GM12878 (cell line): ENCODE measurements at regions of chr10 and their contacts with region 1.

Region 1: DNA sequence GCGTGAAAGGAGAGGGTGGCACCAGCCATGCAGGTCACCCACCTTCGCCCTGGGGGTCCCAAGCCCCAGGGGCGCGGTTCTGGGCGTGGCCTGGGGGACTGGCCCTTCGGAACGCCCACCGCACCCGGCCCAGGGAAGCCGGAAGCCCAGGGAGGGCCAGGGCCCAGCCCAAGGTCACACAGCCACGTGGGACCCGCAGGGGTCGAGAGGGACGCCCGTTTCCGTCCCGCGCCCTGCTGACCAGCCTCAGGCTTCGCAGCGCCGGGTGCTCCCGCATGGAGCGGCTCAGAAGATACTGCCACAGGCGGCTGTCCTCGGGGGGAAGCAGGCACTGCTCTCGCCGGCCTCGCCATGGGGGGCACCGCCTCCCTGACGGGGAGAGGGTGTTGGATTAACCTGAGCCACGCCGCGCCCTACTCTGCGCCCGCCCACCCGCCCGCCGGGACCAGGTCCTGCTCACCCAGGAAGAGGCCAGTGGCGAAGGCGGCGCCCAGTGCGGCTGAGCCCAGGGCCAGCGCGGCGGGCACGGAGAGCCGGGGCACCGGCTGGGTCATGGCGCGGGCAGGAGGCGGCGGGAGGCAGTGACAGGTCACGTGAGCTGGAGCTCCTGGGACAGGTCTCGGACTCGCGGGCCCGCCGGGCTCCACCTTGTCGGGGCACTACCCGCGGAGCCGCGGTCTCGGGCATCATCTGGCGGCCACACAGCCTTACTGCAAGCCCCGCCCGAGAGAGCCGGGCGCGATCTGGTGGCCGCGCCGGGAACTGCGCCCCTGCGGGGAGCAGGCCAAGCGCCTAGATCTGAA is at the start of gene COMTD1:
- DNase-seq: peak; percentile 47
- ATAC-seq: peak; percentile 75
- H3K4me3 ChIP-seq: peak within 1 kb of the TSS; percentile 86
- H3K27ac ChIP-seq: peak within 1 kb of the TSS; percentile 82
- H3K4me1 ChIP-seq: peaks cover 11% of the 10 kb centered on the region
- H3K27me3 ChIP-seq: no peaks in the 10 kb centered on the region
- CTCF ChIP-seq: peak; percentile 100; a peak in 5 of 6 replicates
- EP300 ChIP-seq: no peak
- POLR2A ChIP-seq: peak; percentile 67
- RAD21 ChIP-seq: peak; percentile 85
- polyA plus RNA-seq, gene COMTD1: 0.39 to 3.4 TPM

Region 2: DNA sequence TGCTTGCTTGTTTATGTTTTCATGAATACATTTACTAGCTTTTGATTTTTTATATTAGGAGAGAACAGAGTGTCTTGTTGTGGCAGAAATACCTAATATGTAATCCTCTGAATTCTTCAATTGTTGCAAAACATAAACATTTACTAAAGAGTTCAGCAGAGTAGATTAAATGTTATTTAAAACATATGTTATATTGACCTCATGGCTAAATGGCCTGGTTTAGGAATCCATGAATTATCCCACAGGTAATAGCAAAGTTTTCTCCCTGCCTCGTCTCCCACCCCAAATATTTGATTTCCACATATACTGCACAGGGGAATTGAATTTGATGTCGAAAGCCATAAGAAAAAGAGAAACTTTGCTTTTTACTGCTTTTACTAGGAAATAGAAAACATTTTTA is 972.7 kb before region 1 on chr10:
- CTCF ChIA-PET with region 1: no interaction called
- POLR2A ChIA-PET with region 1: no interaction called
- RAD21 ChIA-PET with region 1: interaction called, 4 read pairs
- SMC1A ChIA-PET with region 1: no interaction called
- in situ Hi-C with region 1: loop called (anchors 10 kb)
- intact Hi-C with region 1: loop called (anchors 1 kb)
- DNase-seq: no peak
- ATAC-seq: no peak
- H3K4me3 ChIP-seq: no peak overlapping the region
- H3K27ac ChIP-seq: no peak overlapping the region
- H3K4me1 ChIP-seq: no peaks in the 10 kb centered on the region
- H3K27me3 ChIP-seq: no peaks in the 10 kb centered on the region
- CTCF ChIP-seq: no peak
- EP300 ChIP-seq: no peak
- POLR2A ChIP-seq: no peak
- RAD21 ChIP-seq: no peak

Region 3: GRCh38 chr10:75099952-75100763 is 135.4 kb before region 1 on chr10:
- CTCF ChIA-PET with region 1: interaction called, 21 read pairs
- POLR2A ChIA-PET with region 1: no interaction called
- RAD21 ChIA-PET with region 1: interaction called, 11 read pairs
- SMC1A ChIA-PET with region 1: interaction called, 3 read pairs
- in situ Hi-C with region 1: no loop called
- intact Hi-C with region 1: no loop called
- DNase-seq: no peak
- ATAC-seq: peak; percentile 98
- H3K4me3 ChIP-seq: no peak overlapping the region
- H3K27ac ChIP-seq: no peak overlapping the region
- H3K4me1 ChIP-seq: no peaks in the 10 kb centered on the region; the same call in 1 of the 2 replicates
- H3K27me3 ChIP-seq: no peaks in the 10 kb centered on the region
- CTCF ChIP-seq: peak; percentile 94 to 99 (median 98)
- EP300 ChIP-seq: no peak
- POLR2A ChIP-seq: no peak
- RAD21 ChIP-seq: peak; percentile 98

Region 4: DNA sequence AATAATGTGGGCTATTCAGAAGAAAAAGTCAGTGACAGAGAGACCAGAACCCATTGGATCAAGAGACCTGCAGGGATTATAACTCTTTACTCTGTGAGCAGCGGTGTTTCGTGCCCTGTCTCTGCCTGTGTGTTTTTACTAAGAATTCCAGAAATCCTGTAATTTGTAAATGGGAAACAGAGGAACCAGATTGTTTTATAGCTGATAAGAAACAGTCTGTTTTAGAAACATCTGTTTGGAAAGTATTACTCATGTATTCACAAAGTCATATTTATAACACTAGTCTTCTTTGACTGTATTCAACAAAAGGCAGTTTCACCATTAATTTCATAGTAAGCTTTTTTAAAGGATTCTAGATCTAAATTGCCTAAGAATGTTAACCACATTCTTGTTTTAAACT is 55.0 kb before region 1 on chr10:
- CTCF ChIA-PET with region 1: interaction called, 20 read pairs
- POLR2A ChIA-PET with region 1: interaction called, 4 read pairs
- RAD21 ChIA-PET with region 1: interaction called, 52 read pairs
- SMC1A ChIA-PET with region 1: interaction called, 7 read pairs
- in situ Hi-C with region 1: no loop called
- intact Hi-C with region 1: no loop called
- DNase-seq: no peak
- ATAC-seq: no peak
- H3K4me3 ChIP-seq: no peak overlapping the region
- H3K27ac ChIP-seq: no peak overlapping the region
- H3K4me1 ChIP-seq: peaks cover 3% of the 10 kb centered on the region; the same call in 1 of the 2 replicates
- H3K27me3 ChIP-seq: no peaks in the 10 kb centered on the region
- CTCF ChIP-seq: no peak
- EP300 ChIP-seq: no peak
- POLR2A ChIP-seq: no peak
- RAD21 ChIP-seq: no peak

Region 5: GRCh38 chr10:75202321-75203045 is 33.1 kb before region 1 on chr10:
- CTCF ChIA-PET with region 1: interaction called, 16 read pairs
- POLR2A ChIA-PET with region 1: no interaction called
- RAD21 ChIA-PET with region 1: interaction called, 3 read pairs
- SMC1A ChIA-PET with region 1: interaction called, 3 read pairs
- in situ Hi-C with region 1: no loop called
- intact Hi-C with region 1: no loop called
- DNase-seq: no peak
- ATAC-seq: no peak
- H3K4me3 ChIP-seq: no peak overlapping the region
- H3K27ac ChIP-seq: no peak overlapping the region
- H3K4me1 ChIP-seq: no peaks in the 10 kb centered on the region
- H3K27me3 ChIP-seq: no peaks in the 10 kb centered on the region
- CTCF ChIP-seq: no peak
- EP300 ChIP-seq: no peak
- POLR2A ChIP-seq: no peak
- RAD21 ChIP-seq: no peak

Region 6: GRCh38 chr10:75223507-75223906 is 12.1 kb before region 1 on chr10:
- CTCF ChIA-PET with region 1: interaction called, 76 read pairs
- POLR2A ChIA-PET with region 1: interaction called, 4 read pairs
- RAD21 ChIA-PET with region 1: interaction called, 5 read pairs
- SMC1A ChIA-PET with region 1: interaction called, 4 read pairs
- in situ Hi-C with region 1: no loop called
- intact Hi-C with region 1: no loop called
- DNase-seq: no peak
- ATAC-seq: no peak; the same call in 1 of the 3 replicates
- H3K4me3 ChIP-seq: no peak overlapping the region
- H3K27ac ChIP-seq: no peak overlapping the region
- H3K4me1 ChIP-seq: peaks cover 3% of the 10 kb centered on the region
- H3K27me3 ChIP-seq: no peaks in the 10 kb centered on the region
- CTCF ChIP-seq: no peak
- EP300 ChIP-seq: no peak
- POLR2A ChIP-seq: no peak
- RAD21 ChIP-seq: no peak

Region 7: DNA sequence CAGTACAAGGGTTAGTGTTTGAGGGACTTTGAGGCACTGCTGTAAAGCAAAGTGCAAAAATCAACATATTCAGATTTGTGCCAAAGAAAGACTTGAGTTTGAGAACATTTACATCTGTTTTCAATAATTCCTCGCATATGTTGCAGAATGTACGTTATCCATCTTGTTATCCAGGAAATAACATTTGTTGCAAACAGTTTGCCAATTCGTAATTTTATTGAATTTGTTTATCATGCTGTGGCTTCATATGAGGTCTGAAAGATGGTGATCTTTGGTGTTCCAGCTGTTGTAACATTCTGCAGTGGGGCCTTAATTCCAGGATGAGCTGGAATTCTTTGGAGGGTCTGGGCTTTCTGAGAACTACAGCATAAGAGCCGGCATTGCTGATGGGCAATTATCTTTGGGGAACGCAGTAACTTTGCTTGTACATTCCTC is 592.0 kb after region 1 on chr10:
- CTCF ChIA-PET with region 1: no interaction called
- POLR2A ChIA-PET with region 1: no interaction called
- RAD21 ChIA-PET with region 1: no interaction called
- SMC1A ChIA-PET with region 1: no interaction called
- in situ Hi-C with region 1: no loop called
- intact Hi-C with region 1: no loop called
- DNase-seq: no peak
- ATAC-seq: no peak
- H3K4me3 ChIP-seq: no peak overlapping the region
- H3K27ac ChIP-seq: no peak overlapping the region
- H3K4me1 ChIP-seq: no peaks in the 10 kb centered on the region
- H3K27me3 ChIP-seq: no peaks in the 10 kb centered on the region
- CTCF ChIP-seq: no peak
- EP300 ChIP-seq: no peak
- POLR2A ChIP-seq: no peak
- RAD21 ChIP-seq: no peak